ENCODE measurements at regions of chr9 and their contacts with region 1.

Region 1: GRCh38 chr9:72022841-72023240 is 37.6 kb downstream of the C9orf57 start:
- DNase-seq: no peak
- H3K4me3 ChIP-seq: no peak overlapping the region
- H3K27ac ChIP-seq: no peak overlapping the region
- H3K4me1 ChIP-seq: no peaks in the 10 kb centered on the region
- H3K27me3 ChIP-seq: no peaks in the 10 kb centered on the region
- CTCF ChIP-seq: no peak
- POLR2A ChIP-seq: no peak

Region 2: GRCh38 chr9:71806901-71807307 is 215.9 kb before region 1 on chr9:
- intact Hi-C with region 1: loop called (anchors 10 kb)
- DNase-seq: no peak
- H3K4me3 ChIP-seq: no peak overlapping the region
- H3K27ac ChIP-seq: no peak overlapping the region
- H3K4me1 ChIP-seq: no peaks in the 10 kb centered on the region
- H3K27me3 ChIP-seq: no peaks in the 10 kb centered on the region
- CTCF ChIP-seq: peak; percentile 67 to 80 (median 68)
- POLR2A ChIP-seq: no peak

Measured in vagina (tissue), 2 donors.